MCF 10A (cell line): ENCODE measurements at regions of chr6 and their contacts with region 1.

Region 1: DNA sequence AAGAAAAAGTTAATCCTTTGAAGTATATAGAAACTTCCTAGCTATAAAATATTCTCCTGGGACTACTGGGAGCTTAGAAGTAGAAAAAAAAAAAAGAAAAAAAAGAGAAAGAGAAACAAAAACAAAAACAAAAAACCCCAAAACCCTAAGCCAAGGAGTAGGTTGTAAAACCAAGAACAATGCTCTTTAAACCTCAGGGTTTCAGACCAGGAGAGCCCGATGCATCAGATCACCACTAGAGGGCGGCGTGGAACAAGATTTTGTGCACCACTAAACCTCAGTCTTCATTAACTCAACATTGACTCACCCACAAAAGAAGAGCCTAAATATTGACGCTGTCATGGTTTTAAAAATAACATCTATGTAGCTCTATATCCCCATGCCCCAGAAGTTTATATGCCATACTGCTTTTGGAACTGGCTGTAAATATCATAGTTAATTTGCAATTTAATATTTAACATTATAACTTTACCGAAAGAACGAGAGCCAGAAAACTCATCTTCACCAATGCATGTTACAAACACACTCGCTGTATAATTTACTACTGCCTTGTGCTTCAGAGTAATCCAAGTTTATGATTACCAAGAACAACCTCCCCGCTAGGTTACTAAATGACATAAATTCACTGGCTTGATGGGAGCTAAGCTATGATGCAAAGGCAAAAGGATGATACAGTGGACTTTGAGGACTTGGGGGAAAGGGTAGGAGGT is 19.2 kb downstream of the MCUR1 start:
- DNase-seq: peak; percentile 87
- H3K4me3 Mint-ChIP-seq: no peak overlapping the region
- H3K27ac Mint-ChIP-seq: no peak overlapping the region
- H3K4me1 Mint-ChIP-seq: peaks cover 5% of the 10 kb centered on the region
- H3K27me3 Mint-ChIP-seq: no peaks in the 10 kb centered on the region
- CTCF ChIP-seq: peak; percentile 83

Region 2: DNA sequence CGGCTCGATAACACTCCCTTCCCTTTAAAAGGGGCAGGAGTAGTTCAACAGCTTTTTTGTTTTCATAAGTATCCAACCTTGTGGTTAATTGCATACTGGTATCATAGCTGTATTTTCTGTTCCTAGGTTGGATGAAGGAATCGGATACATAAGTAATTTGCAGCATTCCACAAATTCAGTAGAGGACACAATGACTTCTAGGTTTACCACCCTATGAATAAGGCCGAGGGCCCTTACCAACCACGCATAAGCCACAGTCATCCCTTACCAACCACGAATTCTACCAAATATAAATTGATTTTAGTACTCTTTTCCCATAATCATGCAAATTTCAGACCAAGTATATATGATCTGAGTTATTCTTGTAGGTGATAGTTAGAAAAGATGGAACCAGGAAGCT is 17.2 kb before region 1 on chr6:
- CTCF ChIA-PET with region 1: interaction called, 12 read pairs
- POLR2A ChIA-PET with region 1: interaction called, 3 read pairs
- intact Hi-C with region 1: no loop called
- DNase-seq: no peak
- H3K4me3 Mint-ChIP-seq: no peak overlapping the region
- H3K27ac Mint-ChIP-seq: no peak overlapping the region
- H3K4me1 Mint-ChIP-seq: no peaks in the 10 kb centered on the region
- H3K27me3 Mint-ChIP-seq: no peaks in the 10 kb centered on the region
- CTCF ChIP-seq: no peak

Region 3: GRCh38 chr6:13908955-13909381 is 113.8 kb after region 1 on chr6:
- CTCF ChIA-PET with region 1: interaction called, 8 read pairs
- POLR2A ChIA-PET with region 1: no interaction called
- intact Hi-C with region 1: loop called (anchors 2 kb)
- DNase-seq: peak; percentile 74
- H3K4me3 Mint-ChIP-seq: no peak overlapping the region
- H3K27ac Mint-ChIP-seq: no peak overlapping the region
- H3K4me1 Mint-ChIP-seq: peaks cover 8% of the 10 kb centered on the region
- H3K27me3 Mint-ChIP-seq: peaks cover 28% of the 10 kb centered on the region
- CTCF ChIP-seq: peak; percentile 74

Region 4: GRCh38 chr6:14921170-14921569 is 1126.0 kb after region 1 on chr6:
- CTCF ChIA-PET with region 1: no interaction called
- POLR2A ChIA-PET with region 1: no interaction called
- intact Hi-C with region 1: no loop called
- DNase-seq: no peak
- H3K4me3 Mint-ChIP-seq: no peak overlapping the region
- H3K27ac Mint-ChIP-seq: no peak overlapping the region
- H3K4me1 Mint-ChIP-seq: no peaks in the 10 kb centered on the region
- H3K27me3 Mint-ChIP-seq: no peaks in the 10 kb centered on the region
- CTCF ChIP-seq: no peak